Heart right ventricle (tissue), 16 donors: ENCODE measurements at regions of chrX and their contacts with region 1.

Region 1: DNA sequence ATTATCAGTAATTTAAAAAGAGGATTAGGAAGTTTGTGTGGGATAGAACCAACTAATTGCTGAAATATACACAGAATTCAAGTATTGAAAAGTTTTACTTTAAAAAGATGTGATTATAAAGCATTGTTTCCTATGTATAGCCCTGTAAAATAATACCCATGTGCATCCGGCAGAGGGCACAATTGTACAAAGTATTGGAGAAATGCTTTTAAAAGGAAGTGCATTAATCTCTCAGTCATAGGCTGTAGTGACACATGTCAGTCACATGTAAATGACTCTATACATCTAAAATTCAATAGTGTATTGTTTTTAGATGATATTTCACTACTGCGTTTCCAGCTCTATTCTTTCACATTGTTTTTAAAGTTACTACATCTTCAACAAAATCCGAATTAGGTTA is 9.7 kb upstream of the GEMIN8 start:
- DNase-seq: peak in 1 of 2 donors; percentile 26
- ATAC-seq: peak in 3 of 8 donors; percentile 58 to 63 (median 61)
- H3K4me3 ChIP-seq: no peak overlapping the region
- H3K27ac ChIP-seq: no peak overlapping the region
- H3K4me1 ChIP-seq: peaks cover 0 to 3% (median 0%) of the 10 kb centered on the region in 9 donors
- H3K27me3 ChIP-seq: peaks cover 0 to 36% (median 0%) of the 10 kb centered on the region in 7 donors
- CTCF ChIP-seq: peak; percentile 26 to 75 (median 64)

Region 2: DNA sequence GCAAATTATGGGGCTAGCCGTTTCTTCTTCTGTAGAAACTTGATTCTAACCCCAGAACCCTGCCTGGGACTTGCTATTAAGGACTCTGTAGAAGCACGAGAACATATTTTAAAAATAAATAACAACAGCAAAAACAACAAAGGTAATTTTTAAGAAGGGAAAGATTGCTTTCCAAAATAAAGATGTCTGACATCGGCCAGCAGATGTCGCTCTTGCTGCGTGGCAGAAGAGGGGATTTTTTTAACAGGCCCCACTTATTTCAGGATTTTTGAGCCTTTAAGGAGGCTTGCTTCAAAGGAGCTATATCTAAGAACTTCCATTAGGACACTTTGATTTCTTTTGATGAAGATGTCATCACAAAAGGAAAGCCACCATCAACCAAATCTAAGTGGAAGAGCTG is 532.8 kb before region 1 on chrX:
- intact Hi-C with region 1: loop called in 5 of 10 experiments (anchors 5 to 10 kb)
- DNase-seq: peak; percentile 18
- ATAC-seq: no peak
- H3K4me3 ChIP-seq: no peak overlapping the region
- H3K27ac ChIP-seq: no peak overlapping the region
- H3K4me1 ChIP-seq: peaks cover 0 to 4% (median 0%) of the 10 kb centered on the region in 9 donors
- H3K27me3 ChIP-seq: peaks cover 0 to 38% (median 0%) of the 10 kb centered on the region in 7 donors
- CTCF ChIP-seq: peak; percentile 54 to 84 (median 71)

Region 3: GRCh38 chrX:15143050-15143824 is 1103.9 kb after region 1 on chrX:
- intact Hi-C with region 1: loop called in 7 of 10 experiments (anchors 5 to 10 kb)
- DNase-seq: peak; percentile 11 to 15
- ATAC-seq: peak in 2 of 8 donors; percentile 42 to 43
- H3K4me3 ChIP-seq: no peak overlapping the region
- H3K27ac ChIP-seq: no peak overlapping the region
- H3K4me1 ChIP-seq: no peaks in the 10 kb centered on the region
- H3K27me3 ChIP-seq: peaks cover 0 to 50% (median 0%) of the 10 kb centered on the region in 7 donors
- CTCF ChIP-seq: peak; percentile 19 to 69 (median 64)

Region 4: GRCh38 chrX:15233416-15234015 is 1194.2 kb after region 1 on chrX:
- intact Hi-C with region 1: loop called in 1 of 10 experiments (anchors 10 kb)
- DNase-seq: no peak
- ATAC-seq: no peak
- H3K4me3 ChIP-seq: no peak overlapping the region
- H3K27ac ChIP-seq: no peak overlapping the region
- H3K4me1 ChIP-seq: no peaks in the 10 kb centered on the region
- H3K27me3 ChIP-seq: peaks cover 0 to 49% (median 0%) of the 10 kb centered on the region in 7 donors
- CTCF ChIP-seq: no peak

Region 5: DNA sequence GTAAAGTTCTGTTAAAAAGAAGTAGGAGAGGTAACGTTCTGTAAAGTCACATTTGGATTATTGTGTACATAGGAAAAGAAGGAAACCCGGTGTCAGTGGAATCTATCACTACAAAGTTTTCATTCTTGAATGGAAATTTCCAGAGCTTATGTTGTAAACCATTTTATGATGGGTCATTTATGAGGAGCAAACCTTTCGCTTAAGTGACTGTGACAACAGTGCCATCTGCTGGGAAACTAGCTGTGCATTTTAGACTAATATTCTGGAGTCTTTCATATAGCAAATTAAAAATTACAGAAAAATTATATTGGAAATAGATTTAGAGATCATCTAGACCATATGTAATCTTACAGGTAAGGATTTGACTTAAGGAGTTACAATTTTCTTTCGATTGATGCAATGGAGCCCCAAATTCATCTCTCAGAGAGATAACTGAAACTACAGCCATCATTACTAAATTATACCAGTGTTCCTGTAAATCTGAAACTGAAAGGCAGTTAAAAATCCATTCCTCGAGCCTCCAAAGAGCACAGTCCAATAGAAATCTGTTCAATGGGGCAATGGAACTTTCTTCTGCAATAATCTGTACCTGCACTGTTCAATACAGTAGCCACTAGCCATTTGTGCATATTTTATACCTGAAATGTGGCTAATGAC is 1203.7 kb after region 1 on chrX:
- intact Hi-C with region 1: loop called in 8 of 10 experiments (anchors 2 to 10 kb)
- DNase-seq: peak in 1 of 2 donors; percentile 4
- ATAC-seq: no peak
- H3K4me3 ChIP-seq: no peak overlapping the region
- H3K27ac ChIP-seq: no peak overlapping the region
- H3K4me1 ChIP-seq: no peaks in the 10 kb centered on the region
- H3K27me3 ChIP-seq: peaks cover 0 to 40% (median 0%) of the 10 kb centered on the region in 7 donors
- CTCF ChIP-seq: peak in 8 of 9 donors; percentile 16 to 68 (median 54)